ENCODE measurements at regions of chr11 and their contacts with region 1.

Region 1: DNA sequence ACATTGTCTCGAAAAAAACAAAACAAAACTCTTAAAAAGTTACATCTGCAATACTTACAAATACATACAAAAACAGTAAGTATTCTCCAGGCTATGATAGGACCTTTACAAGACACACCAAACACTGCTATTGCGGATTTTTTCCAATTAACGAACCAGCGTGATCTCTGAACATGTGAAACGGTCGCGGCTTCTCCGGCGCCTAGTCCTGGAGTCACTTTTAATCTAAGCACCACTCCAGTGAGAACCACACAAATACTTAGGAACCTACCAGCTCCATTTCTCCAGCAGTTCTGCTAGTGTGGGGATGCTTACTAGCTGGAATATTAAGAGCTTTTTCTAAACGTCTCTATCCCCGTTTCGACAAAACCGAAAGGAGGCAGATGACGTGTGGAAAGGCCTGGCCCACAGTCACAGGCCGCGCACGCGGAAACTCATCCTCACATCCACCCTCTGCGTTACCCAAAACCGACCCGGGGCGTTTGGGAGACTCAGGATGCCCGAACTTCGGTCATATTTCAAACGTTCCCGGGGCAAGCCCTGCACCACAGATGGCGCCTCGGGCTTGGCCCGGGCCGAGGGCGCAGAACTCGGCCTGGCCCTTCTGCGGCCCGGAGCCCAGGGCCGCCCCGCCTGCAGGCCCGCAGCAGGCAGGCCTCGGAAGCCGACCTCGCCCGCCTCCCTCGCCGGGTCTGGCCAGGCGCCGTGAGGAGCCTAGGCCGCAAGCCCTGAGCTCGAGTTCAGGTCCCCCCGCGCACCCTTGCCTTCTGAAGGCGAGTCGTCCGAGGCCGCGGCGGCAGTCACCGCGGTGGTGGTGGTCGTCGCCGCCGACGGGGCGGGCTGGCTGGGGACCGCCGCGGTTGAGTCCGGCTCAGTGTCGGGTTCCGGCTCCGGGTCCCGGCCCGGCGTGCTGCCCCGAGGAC is 575 bp downstream of the FNBP4 start:
- DNase-seq: peak; percentile 89
- ATAC-seq: peak; percentile 37
- H3K4me3 Mint-ChIP-seq: peak overlapping the region; percentile 98
- H3K27ac Mint-ChIP-seq: peak overlapping the region; percentile 98
- H3K4me1 Mint-ChIP-seq: peaks cover 18% of the 10 kb centered on the region
- H3K27me3 Mint-ChIP-seq: no peaks in the 10 kb centered on the region

Region 2: GRCh38 chr11:46845740-46846509 is 920.6 kb before region 1 on chr11 and contains the start of gene CKAP5:
- CTCF ChIA-PET with region 1: no interaction called
- POLR2A ChIA-PET with region 1: no interaction called
- intact Hi-C with region 1: loop called in 1 of 2 experiments (anchors 1 kb)
- DNase-seq: peak; percentile 92
- ATAC-seq: peak; percentile 92
- H3K4me3 Mint-ChIP-seq: peak within 1 kb of the TSS; percentile 86
- H3K27ac Mint-ChIP-seq: peak within 1 kb of the TSS; percentile 94
- H3K4me1 Mint-ChIP-seq: peaks cover 30% of the 10 kb centered on the region
- H3K27me3 Mint-ChIP-seq: no peaks in the 10 kb centered on the region
- total RNA-seq, gene CKAP5: 166 to 183 TPM

Region 3: DNA sequence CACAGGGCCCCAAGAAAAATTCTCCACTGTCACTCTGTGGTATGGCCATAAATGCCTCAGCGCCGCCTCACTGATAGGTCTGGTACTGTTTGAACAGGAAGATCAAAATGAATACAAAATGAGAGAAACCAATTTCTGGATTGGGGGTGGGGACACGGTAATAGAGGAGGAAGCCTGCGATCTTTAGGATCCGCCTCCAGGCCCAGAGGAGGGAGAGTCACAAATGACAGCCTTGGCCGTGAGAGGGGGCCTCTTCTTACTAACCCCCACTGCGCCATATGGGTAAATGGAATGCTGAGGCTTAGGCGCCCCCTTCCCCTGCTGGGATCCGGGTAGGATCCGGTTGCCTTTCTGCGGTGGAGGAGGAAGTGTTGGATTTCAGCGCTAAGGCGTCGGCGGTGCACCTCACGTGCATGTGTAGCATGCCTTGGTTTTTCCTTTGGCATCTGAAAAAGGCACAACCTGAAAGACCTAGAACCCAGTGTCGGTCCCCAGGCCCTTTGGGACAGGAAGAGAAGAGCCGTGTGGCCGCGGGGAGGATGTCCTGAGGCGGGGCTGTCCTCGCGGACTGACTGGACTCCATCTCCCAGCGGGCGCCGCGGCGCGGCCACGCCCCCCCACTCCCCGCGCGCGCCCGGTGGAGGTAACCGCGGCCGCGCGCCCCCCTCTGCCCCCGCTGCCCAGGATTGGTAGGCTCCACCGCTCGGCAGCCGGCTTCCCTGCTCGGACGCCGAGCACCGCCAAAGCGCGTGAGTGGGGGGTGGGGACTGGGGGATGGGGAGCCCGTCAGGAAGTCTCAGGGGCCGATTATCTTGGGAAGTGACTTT is 497.4 kb before region 1 on chr11:
- CTCF ChIA-PET with region 1: no interaction called
- POLR2A ChIA-PET with region 1: no interaction called
- intact Hi-C with region 1: loop called (anchors 1 to 10 kb)
- DNase-seq: peak; percentile 93
- ATAC-seq: peak; percentile 61
- H3K4me3 Mint-ChIP-seq: peak overlapping the region; percentile 76
- H3K27ac Mint-ChIP-seq: peak overlapping the region; percentile 98
- H3K4me1 Mint-ChIP-seq: peaks cover 60% of the 10 kb centered on the region
- H3K27me3 Mint-ChIP-seq: no peaks in the 10 kb centered on the region

Region 4: DNA sequence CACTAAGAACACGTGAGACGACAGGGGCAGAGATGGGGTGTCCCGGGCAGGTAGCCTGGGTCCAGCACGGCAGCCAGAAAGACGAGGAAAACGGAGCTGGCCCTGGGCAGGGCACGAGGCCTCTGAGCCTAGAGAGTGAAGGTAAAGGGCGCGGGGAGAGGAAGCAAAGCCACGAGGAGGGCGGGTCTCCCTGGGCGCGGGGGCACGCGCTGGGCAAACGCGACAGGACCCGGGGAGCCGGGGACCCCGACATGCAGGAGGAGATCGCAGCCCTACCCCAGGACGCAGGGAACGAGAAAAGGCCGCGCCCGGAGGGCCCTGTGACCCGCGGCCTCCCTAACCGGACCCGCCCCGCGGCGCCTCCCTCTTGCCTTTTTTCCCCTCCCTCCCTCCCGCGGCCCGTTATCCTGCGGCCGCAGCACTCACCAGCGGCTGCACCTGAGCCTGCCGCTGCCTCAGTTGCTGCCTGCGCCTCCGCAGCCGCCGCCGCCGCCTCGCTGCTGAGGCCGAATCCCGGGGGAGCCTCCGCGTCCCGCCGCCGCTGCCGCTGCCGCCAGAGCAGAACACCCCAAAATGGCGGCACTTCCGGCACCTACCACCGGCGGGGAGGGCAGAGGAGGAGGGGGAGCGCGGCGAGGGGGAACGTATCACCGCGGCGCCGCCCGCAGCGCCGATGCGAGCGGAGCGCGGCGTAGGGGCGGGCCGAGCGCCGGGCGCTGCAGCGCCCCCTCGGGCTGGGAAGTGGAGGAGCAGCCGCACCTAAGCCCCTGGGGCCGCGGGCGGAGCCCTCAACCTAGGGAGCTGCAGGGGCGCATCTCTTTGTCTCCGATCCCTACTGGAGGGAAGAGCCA is 213.8 kb before region 1 on chr11 and contains the start of gene CELF1:
- CTCF ChIA-PET with region 1: interaction called, 3 read pairs
- POLR2A ChIA-PET with region 1: interaction called, 6 read pairs
- intact Hi-C with region 1: loop called in 1 of 2 experiments (anchors 1 kb)
- DNase-seq: peak; percentile 97
- ATAC-seq: peak; percentile 94
- H3K4me3 Mint-ChIP-seq: peak within 1 kb of the TSS; percentile 96
- H3K27ac Mint-ChIP-seq: peak within 1 kb of the TSS; percentile 94
- H3K4me1 Mint-ChIP-seq: peaks cover 38% of the 10 kb centered on the region
- H3K27me3 Mint-ChIP-seq: no peaks in the 10 kb centered on the region
- total RNA-seq, gene CELF1: 132 to 143 TPM

Region 5: DNA sequence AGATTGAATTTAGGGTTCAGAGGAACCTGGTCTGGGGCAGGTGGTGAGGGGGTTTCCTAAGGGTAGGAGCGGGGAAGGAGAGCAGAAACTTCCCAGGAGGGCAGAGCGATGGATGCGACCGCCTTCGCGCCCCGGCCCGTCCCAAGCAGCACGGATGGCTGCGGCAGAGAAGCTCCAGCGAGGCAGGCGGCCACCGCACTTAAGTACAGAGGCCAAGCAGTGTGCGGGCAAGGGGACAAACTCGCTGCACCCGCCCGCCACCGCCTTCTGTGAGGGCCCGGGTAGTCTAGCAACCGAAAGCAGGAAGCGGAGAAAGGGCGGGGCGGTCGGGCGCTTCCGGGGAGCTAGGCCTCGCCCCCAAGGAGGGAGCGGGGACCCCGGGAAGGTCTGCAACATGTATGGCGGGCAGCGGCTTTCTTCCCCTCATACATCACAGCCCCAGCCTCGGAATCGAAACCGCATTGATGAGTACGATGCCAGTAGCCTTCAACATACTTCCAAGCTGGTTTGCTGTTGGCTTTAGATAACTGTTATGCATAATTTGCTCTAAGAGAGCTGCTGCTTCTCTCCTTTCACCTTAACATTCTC is 51.4 kb before region 1 on chr11 and contains the start of gene AGBL2:
- CTCF ChIA-PET with region 1: interaction called, 3 read pairs
- POLR2A ChIA-PET with region 1: interaction called, 8 read pairs
- intact Hi-C with region 1: loop called (anchors 1 to 2 kb)
- DNase-seq: peak; percentile 92
- ATAC-seq: peak; percentile 98
- H3K4me3 Mint-ChIP-seq: peak within 1 kb of the TSS; percentile 91
- H3K27ac Mint-ChIP-seq: peak within 1 kb of the TSS; percentile 96
- H3K4me1 Mint-ChIP-seq: peaks cover 22% of the 10 kb centered on the region
- H3K27me3 Mint-ChIP-seq: no peaks in the 10 kb centered on the region
- total RNA-seq, gene AGBL2: 3.5 to 5.6 TPM

Region 6: DNA sequence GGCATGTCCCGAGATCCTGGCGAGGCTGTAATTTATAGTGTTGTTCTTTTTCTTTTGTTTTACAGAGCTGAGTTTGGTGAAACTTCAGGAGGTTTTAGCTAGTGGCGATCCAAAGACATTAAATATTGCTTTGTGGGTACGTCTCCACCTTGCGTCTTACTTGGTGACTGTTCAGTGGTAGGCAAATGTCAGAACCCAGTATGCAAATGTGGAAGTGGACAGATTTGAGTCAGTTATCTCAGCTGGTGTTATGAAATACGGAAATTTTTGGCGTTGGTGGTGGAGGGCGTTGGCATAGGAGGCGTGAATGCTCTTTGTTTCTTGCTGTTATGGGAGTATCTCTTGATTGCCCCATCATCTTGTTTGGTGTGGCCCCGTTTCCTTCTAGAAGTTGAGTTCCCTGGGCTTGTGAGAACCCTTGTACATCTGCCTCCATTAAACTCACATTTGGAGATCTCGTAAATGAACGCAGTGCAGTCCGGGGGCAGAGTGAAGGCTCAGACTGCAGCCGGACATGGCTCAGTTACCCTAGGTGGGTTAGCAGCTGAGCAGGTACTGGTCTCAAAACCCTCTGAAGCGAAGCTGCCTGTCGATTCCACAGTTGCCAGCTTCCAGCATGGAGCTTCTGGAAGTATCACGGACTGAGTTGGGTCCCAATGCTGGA is 253.7 kb after region 1 on chr11:
- CTCF ChIA-PET with region 1: no interaction called
- POLR2A ChIA-PET with region 1: no interaction called
- intact Hi-C with region 1: no loop called
- DNase-seq: peak; percentile 59
- ATAC-seq: peak; percentile 59
- H3K4me3 Mint-ChIP-seq: peak overlapping the region; percentile 13
- H3K27ac Mint-ChIP-seq: peak overlapping the region; percentile 76
- H3K4me1 Mint-ChIP-seq: peaks cover 72% of the 10 kb centered on the region
- H3K27me3 Mint-ChIP-seq: no peaks in the 10 kb centered on the region

Region 7: DNA sequence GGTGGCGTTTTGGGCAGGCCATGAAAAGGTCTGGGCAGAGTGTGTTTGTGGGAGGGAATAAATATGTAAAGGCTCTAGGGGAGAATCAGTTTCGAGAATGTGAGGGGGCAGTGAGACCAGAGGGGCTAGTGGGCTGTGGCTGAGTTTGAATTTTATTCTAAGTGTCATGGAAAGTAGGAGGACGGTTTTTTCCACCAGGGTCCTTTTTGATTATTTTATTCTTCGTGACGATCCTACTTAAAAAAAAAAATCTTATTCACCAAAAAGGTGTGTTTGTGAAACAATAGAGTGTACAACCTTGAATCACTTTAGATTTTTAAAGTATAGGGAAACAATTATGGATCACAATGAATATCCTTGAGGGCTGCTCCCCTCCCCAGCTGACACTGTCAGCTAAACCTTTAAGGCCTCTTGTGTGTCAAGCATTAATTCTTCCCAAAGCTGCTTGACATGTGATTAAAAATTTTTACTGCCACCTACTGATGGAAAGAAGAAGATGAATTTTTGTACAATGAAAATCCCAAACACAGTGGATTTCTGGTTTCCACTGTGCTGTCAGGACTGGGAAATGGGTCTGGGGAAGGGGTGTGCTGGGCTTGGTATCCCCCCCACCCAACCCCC is 342.6 kb after region 1 on chr11:
- CTCF ChIA-PET with region 1: no interaction called
- POLR2A ChIA-PET with region 1: no interaction called
- intact Hi-C with region 1: loop called (anchors 2 to 10 kb)
- DNase-seq: no peak
- ATAC-seq: peak; percentile 34
- H3K4me3 Mint-ChIP-seq: peak overlapping the region; percentile 66
- H3K27ac Mint-ChIP-seq: peak overlapping the region; percentile 87
- H3K4me1 Mint-ChIP-seq: peaks cover 49% of the 10 kb centered on the region
- H3K27me3 Mint-ChIP-seq: no peaks in the 10 kb centered on the region